ENCODE measurements at regions of chr19 and their contacts with region 1.

Region 1: DNA sequence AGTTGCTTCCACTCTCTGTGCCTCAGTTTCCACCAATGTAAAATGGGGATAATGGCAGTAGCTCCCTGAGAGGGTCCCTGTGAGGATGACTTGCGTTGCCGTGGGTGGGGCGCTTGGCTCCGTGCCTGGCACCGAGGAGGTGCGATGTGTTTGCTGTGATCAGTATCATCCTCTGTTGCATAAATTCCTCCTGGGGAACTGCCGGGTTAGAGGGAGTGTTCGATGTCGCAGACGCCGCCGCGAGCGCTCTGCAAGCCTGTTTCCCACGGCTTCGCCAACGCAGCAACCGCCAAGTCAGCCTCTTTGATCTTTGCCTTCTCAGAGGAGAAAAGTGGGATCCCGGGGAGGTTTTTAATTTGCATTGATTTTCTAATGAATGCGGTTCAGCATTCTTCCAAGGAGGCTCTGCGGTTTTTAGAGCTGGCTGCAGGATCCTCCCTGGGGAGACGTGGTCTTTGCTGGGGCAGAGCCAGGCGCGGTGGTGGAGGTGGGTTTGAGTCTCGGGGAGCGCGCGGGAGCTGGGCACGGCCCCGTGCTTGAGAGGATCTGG is 7.6 kb downstream of the GPR32 start:
- DNase-seq: no peak
- ATAC-seq: no peak
- H3K4me3 ChIP-seq: no peak overlapping the region
- H3K4me3 Mint-ChIP-seq: no peak overlapping the region
- H3K27ac ChIP-seq: no peak overlapping the region
- H3K27ac Mint-ChIP-seq: no peak overlapping the region
- H3K4me1 ChIP-seq: peaks cover 4% of the 10 kb centered on the region
- H3K4me1 Mint-ChIP-seq: no peaks in the 10 kb centered on the region
- H3K27me3 ChIP-seq: peaks cover 7 to 15% of the 10 kb centered on the region in 2 experiments
- H3K27me3 Mint-ChIP-seq: peaks cover 58% of the 10 kb centered on the region
- CTCF ChIP-seq: no peak

Region 2: DNA sequence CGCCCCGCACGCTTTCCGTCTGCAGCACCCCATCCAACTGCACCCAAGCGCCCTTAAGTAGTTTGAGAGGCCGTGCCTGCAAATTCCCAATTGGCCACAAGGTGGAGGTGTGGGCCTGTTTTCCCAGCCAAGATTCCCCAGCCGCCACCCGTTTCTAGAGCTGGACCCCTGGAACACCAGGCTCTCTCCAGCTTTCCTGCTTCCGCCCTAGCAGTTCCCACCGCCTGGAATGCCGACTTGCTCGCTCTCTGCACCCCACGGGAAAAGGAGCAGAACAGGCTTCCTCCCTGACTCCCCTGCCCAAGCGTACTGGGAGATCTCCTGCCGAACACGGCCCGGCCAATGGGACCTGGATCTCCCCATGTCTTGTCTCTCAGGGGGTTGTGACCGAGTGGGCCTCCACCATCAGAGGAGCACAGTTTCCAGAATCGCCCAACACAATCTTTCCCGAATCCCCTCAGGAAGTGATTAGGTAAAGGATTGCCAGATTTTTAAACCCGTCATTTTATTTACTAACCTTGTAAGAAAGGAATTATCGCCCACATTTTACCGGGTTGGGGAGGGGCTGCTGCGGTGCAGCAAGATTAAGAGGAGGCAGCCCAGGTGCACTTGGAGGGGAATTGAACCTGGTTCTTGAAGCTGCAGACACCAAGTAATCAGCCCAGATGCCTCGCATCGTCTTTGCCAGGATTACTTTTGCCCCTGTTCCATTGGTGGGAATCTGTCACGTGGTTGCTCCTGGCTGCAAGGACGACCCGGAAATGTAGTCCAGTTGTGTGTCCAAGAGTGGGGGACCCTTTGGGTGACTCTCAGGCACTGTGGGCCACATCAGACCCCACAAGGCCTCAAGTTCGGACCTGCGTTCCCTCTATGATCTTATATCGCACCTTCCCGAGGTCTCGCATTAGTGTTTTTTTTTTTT is 408.9 kb before region 1 on chr19:
- CTCF ChIA-PET with region 1: interaction called, 6 read pairs
- POLR2A ChIA-PET with region 1: no interaction called
- intact Hi-C with region 1: loop called in 1 of 2 experiments (anchors 1 kb)
- DNase-seq: peak; percentile 59 to 91 (median 79)
- ATAC-seq: peak; percentile 81
- H3K4me3 ChIP-seq: peak overlapping the region; percentile 52 to 66
- H3K4me3 Mint-ChIP-seq: peak overlapping the region; percentile 87
- H3K27ac ChIP-seq: peak overlapping the region; percentile 32 to 49
- H3K27ac Mint-ChIP-seq: peak overlapping the region; percentile 82
- H3K4me1 ChIP-seq: peaks cover 15% of the 10 kb centered on the region
- H3K4me1 Mint-ChIP-seq: peaks cover 28% of the 10 kb centered on the region
- H3K27me3 ChIP-seq: no peaks in the 10 kb centered on the region
- H3K27me3 Mint-ChIP-seq: no peaks in the 10 kb centered on the region
- CTCF ChIP-seq: peak; percentile 86

Region 3: GRCh38 chr19:50537762-50538230 is 240.0 kb before region 1 on chr19:
- CTCF ChIA-PET with region 1: interaction called, 29 read pairs
- POLR2A ChIA-PET with region 1: no interaction called
- intact Hi-C with region 1: loop called in 1 of 2 experiments (anchors 1 kb)
- DNase-seq: peak in 8 of 9 experiments; percentile 35 to 71 (median 62)
- ATAC-seq: no peak
- H3K4me3 ChIP-seq: no peak overlapping the region
- H3K4me3 Mint-ChIP-seq: no peak overlapping the region
- H3K27ac ChIP-seq: no peak overlapping the region
- H3K27ac Mint-ChIP-seq: no peak overlapping the region
- H3K4me1 ChIP-seq: no peaks in the 10 kb centered on the region
- H3K4me1 Mint-ChIP-seq: peaks cover 3% of the 10 kb centered on the region
- H3K27me3 ChIP-seq: peaks cover 0 to 5% of the 10 kb centered on the region in 2 experiments
- H3K27me3 Mint-ChIP-seq: peaks cover 16% of the 10 kb centered on the region
- CTCF ChIP-seq: peak; percentile 62

Region 4: DNA sequence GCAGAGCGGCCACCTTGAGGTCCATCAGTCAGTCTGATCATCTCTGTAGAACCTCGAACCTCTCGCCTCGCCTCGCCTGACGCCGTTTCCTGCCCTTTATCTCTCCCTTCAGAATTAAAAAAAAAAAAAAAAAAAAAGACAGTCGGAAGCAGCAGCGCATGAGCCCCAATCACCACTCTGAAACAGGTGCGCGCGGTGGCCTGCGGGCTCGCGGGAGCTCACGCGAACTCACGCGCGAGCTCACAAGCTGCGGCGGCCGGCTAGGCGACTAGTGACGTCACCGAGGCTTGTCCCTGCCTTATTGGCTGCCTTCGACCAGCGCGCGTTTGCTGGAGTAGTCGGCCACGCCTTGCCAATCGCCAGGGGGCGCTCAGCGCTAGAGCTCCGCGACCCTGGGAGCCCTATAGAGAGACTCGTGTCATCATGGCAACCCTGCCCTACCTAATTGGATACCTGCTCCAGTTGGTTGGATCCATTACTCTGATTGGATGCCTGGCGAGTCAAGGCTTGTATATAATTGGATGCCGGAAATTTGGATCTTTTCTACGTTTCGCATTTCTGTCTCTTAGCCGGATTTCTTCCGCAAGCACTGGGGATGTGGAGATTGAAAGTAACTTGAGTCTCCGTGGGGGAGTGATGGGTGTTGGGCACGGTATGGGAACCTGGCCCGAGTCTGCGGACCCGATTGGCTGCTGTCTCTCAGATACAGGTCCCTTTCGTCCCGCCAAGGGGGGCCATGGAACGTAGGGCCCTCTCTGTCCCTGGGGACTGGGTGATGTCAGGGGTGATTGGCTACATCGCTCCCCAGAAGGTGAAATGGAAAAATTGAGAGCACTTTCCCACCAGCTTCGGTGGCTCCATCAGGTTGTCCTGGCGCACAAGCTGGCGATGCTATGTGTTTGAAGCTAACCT is 169.7 kb before region 1 on chr19:
- CTCF ChIA-PET with region 1: no interaction called
- POLR2A ChIA-PET with region 1: no interaction called
- intact Hi-C with region 1: loop called in 1 of 2 experiments (anchors 1 kb)
- DNase-seq: peak; percentile 32 to 85 (median 71)
- ATAC-seq: peak; percentile 76
- H3K4me3 ChIP-seq: no peak overlapping the region
- H3K4me3 Mint-ChIP-seq: peak overlapping the region; percentile 13
- H3K27ac ChIP-seq: no peak overlapping the region
- H3K27ac Mint-ChIP-seq: no peak overlapping the region
- H3K4me1 ChIP-seq: no peaks in the 10 kb centered on the region
- H3K4me1 Mint-ChIP-seq: peaks cover 6% of the 10 kb centered on the region
- H3K27me3 ChIP-seq: peaks cover 0 to 6% of the 10 kb centered on the region in 2 experiments
- H3K27me3 Mint-ChIP-seq: peaks cover 26% of the 10 kb centered on the region
- CTCF ChIP-seq: no peak

Region 5: DNA sequence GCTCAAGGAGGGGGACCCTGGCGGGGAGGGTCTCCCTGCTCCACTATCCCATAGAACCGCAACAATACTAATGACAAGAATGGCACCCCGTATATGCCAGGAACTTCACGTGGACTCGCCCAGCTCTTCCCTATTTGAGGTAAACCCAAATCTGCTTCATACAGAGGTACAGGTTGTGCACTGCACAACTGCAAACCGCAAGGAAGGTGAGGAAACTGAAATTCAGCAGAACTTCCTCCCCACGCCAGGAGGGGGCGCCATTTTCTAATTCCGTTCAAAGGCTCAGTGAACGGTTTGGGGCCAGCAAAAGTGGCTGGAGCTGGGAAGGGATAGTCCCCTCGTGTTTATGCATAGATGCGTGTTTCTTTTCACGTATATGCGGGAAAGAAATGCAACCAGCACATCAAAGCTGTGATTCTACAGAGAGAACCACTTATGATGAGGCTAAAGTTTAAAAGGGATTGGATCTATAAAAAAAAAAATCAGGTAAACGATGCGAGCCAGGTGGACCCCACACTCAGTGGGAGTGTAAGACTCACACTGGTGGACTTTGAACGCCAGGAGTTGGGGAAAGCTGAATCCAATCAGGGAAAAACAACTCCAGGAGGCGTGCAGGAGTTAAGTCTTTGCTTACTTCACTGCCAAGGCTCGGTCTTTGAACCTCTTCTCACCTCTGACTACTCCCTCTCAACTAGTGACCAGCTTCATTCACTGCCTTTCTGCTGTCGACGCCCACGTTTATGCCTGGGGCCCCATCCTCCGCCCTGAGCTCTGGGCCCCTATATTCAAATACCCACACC is 108.3 kb before region 1 on chr19:
- CTCF ChIA-PET with region 1: interaction called, 4 read pairs
- POLR2A ChIA-PET with region 1: no interaction called
- intact Hi-C with region 1: loop called in 1 of 2 experiments (anchors 2 kb)
- DNase-seq: peak in 7 of 9 experiments; percentile 20 to 61 (median 47)
- ATAC-seq: peak; percentile 29
- H3K4me3 ChIP-seq: no peak overlapping the region
- H3K4me3 Mint-ChIP-seq: no peak overlapping the region
- H3K27ac ChIP-seq: no peak overlapping the region
- H3K27ac Mint-ChIP-seq: no peak overlapping the region
- H3K4me1 ChIP-seq: peaks cover 5% of the 10 kb centered on the region
- H3K4me1 Mint-ChIP-seq: no peaks in the 10 kb centered on the region
- H3K27me3 ChIP-seq: peaks cover 10 to 13% of the 10 kb centered on the region in 2 experiments
- H3K27me3 Mint-ChIP-seq: peaks cover 42% of the 10 kb centered on the region
- CTCF ChIP-seq: peak; percentile 69

Region 6: DNA sequence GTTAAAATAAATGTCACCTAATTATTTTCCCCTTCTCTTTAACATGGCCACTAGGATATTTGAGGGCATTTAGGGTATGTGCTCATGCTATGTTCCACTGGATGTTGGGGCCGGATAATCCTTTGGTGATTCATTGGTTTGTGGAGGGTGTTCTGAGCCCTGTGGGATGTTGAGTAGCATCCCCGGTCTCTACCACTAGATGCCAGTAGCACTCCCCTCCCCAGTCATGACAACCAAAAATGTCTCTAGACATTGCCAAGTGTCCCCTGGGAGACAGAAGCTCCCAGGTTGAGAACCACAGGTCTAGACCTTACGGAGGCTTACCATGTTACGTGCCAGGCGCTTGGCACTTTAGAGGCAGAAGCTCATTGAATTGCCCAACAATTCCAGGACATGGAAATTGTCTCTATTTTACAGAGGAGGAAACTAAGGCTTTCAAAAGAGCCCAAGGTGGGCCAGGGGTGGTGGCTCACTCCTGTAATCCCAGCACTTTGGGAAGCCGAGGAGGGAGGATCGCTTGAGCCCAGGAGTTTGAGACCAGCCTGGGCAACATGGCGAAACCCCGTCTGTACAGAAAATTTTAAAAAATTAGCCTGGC is 72.3 kb before region 1 on chr19:
- CTCF ChIA-PET with region 1: interaction called, 5 read pairs
- POLR2A ChIA-PET with region 1: no interaction called
- intact Hi-C with region 1: loop called in 1 of 2 experiments (anchors 1 kb)
- DNase-seq: peak in 6 of 9 experiments; percentile 13 to 63 (median 39)
- ATAC-seq: peak; percentile 75
- H3K4me3 ChIP-seq: no peak overlapping the region
- H3K4me3 Mint-ChIP-seq: no peak overlapping the region
- H3K27ac ChIP-seq: no peak overlapping the region
- H3K27ac Mint-ChIP-seq: no peak overlapping the region
- H3K4me1 ChIP-seq: peaks cover 7% of the 10 kb centered on the region
- H3K4me1 Mint-ChIP-seq: no peaks in the 10 kb centered on the region
- H3K27me3 ChIP-seq: peaks cover 0 to 3% of the 10 kb centered on the region in 2 experiments
- H3K27me3 Mint-ChIP-seq: peaks cover 25% of the 10 kb centered on the region
- CTCF ChIP-seq: peak; percentile 51

Region 7: DNA sequence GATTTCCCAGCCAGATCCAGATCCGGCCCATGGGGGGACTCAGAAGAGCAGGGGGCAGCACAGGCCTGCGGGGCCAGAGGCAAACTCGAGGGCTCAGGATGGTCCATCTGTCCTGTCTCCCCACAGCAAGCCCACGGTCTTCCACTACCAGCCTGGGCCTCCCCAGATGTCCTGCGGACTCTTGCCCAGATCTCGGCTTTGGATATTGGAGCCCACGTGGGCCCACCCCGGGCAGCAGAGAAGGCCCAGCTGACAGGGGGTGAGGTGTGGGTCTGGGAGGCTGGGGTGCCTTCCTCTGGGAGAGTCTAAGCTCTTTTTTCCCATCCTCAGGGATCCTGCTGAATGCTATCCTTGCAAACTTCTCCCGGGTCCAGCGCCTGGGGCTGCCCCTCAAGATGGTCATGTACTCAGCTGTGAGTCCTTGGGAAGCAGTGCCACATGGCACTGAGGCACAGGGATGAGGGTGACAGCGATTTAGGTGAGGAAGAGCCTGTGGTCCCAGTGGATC is 15.8 kb after region 1 on chr19:
- CTCF ChIA-PET with region 1: interaction called, 14 read pairs
- POLR2A ChIA-PET with region 1: no interaction called
- intact Hi-C with region 1: no loop called
- DNase-seq: no peak
- ATAC-seq: no peak
- H3K4me3 ChIP-seq: no peak overlapping the region
- H3K4me3 Mint-ChIP-seq: no peak overlapping the region
- H3K27ac ChIP-seq: no peak overlapping the region
- H3K27ac Mint-ChIP-seq: no peak overlapping the region
- H3K4me1 ChIP-seq: peaks cover 2% of the 10 kb centered on the region
- H3K4me1 Mint-ChIP-seq: peaks cover 8% of the 10 kb centered on the region
- H3K27me3 ChIP-seq: no peaks in the 10 kb centered on the region
- H3K27me3 Mint-ChIP-seq: no peaks in the 10 kb centered on the region
- CTCF ChIP-seq: no peak